CD4-positive, alpha-beta T cell (primary cell): ENCODE measurements at regions of chr9 and their contacts with region 1.

Region 1: GRCh38 chr9:9523476-9524139 is 1089.2 kb downstream of the PTPRD start:
- DNase-seq: no peak
- ATAC-seq: no peak
- H3K4me3 ChIP-seq: no peak overlapping the region
- H3K4me3 Mint-ChIP-seq: no peak overlapping the region
- H3K27ac ChIP-seq: no peak overlapping the region
- H3K27ac Mint-ChIP-seq: no peak overlapping the region
- H3K4me1 ChIP-seq: no peaks in the 10 kb centered on the region
- H3K4me1 Mint-ChIP-seq: no peaks in the 10 kb centered on the region
- H3K27me3 ChIP-seq: no peaks in the 10 kb centered on the region
- H3K27me3 Mint-ChIP-seq: no peaks in the 10 kb centered on the region
- CTCF ChIP-seq: no peak

Region 2: GRCh38 chr9:9016597-9016996 is 507.0 kb before region 1 on chr9:
- CTCF ChIA-PET with region 1: no interaction called
- POLR2A ChIA-PET with region 1: no interaction called
- intact Hi-C with region 1: no loop called
- DNase-seq: no peak
- ATAC-seq: no peak
- H3K4me3 ChIP-seq: no peak overlapping the region
- H3K4me3 Mint-ChIP-seq: no peak overlapping the region
- H3K27ac ChIP-seq: no peak overlapping the region
- H3K27ac Mint-ChIP-seq: no peak overlapping the region
- H3K4me1 ChIP-seq: no peaks in the 10 kb centered on the region
- H3K4me1 Mint-ChIP-seq: no peaks in the 10 kb centered on the region
- H3K27me3 ChIP-seq: no peaks in the 10 kb centered on the region
- H3K27me3 Mint-ChIP-seq: no peaks in the 10 kb centered on the region
- CTCF ChIP-seq: no peak

Region 3: GRCh38 chr9:9448796-9449195 is 74.8 kb before region 1 on chr9:
- CTCF ChIA-PET with region 1: no interaction called
- POLR2A ChIA-PET with region 1: no interaction called
- intact Hi-C with region 1: loop called in 1 of 2 experiments (anchors 10 kb)
- DNase-seq: no peak
- ATAC-seq: no peak
- H3K4me3 ChIP-seq: no peak overlapping the region
- H3K4me3 Mint-ChIP-seq: no peak overlapping the region
- H3K27ac ChIP-seq: no peak overlapping the region
- H3K27ac Mint-ChIP-seq: no peak overlapping the region
- H3K4me1 ChIP-seq: no peaks in the 10 kb centered on the region
- H3K4me1 Mint-ChIP-seq: no peaks in the 10 kb centered on the region
- H3K27me3 ChIP-seq: no peaks in the 10 kb centered on the region
- H3K27me3 Mint-ChIP-seq: no peaks in the 10 kb centered on the region
- CTCF ChIP-seq: no peak